ENCODE measurements at regions of chr9 and their contacts with region 1.

Region 1: GRCh38 chr9:114348906-114349482 is 19.3 kb downstream of the ORM2 start:
- DNase-seq: peak; percentile 84 to 96 (median 95)
- H3K4me3 ChIP-seq: no peak overlapping the region
- H3K27ac ChIP-seq: peak overlapping the region in 3 of 5 donors; percentile 63 to 85 (median 68)
- H3K4me1 ChIP-seq: peaks cover 6 to 7% of the 10 kb centered on the region in 2 donors
- H3K27me3 ChIP-seq: no peaks in the 10 kb centered on the region
- CTCF ChIP-seq: no peak
- POLR2A ChIP-seq: peak in 1 of 2 donors; percentile 16

Region 2: DNA sequence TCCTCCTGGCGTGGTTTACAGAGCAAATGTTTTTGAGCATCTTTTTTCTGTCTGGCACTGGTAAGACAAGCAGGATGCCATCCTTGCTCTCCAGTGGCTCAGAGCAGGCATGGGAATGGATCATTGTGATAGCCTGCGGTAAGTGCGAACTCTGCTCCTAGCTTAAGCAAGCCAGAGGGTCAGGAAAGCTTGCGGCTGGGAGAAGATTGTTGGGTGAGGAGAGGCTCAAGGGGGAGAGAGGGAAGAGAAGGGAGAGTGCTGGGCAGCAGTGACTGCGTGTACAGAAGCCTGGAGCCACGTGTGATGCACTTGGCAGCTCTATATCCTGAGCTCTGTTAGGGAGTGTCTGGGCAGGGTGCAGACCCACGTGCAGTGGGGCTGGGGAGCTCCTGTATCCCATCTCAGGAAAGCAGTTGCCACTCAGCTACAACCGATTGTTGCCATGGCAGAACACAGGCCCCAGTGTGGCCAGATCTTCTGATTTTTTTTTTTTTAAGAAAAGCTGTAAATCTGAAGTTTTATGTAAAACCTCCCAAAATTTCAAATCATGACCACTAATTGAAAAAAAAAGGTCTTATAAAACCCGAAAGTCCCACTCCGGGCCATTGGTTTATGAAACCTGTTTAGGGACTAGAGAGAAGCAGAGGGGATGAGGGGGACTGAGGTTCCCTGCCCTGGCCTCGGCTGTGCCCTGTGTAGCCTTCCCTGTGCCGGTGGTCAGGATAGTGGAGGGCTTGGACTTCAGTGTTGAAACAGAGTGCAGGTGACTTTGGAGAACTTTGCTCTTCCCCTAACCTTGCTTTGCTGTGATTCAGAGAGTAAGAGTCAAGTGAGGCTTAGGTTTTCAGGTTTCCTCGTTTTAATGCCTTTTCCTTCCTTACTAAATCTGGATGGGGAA is 405.6 kb before region 1 on chr9:
- intact Hi-C with region 1: no loop called
- DNase-seq: peak in 2 of 7 donors; percentile 3 to 41
- H3K4me3 ChIP-seq: no peak overlapping the region
- H3K27ac ChIP-seq: no peak overlapping the region
- H3K4me1 ChIP-seq: no peaks in the 10 kb centered on the region
- H3K27me3 ChIP-seq: no peaks in the 10 kb centered on the region
- CTCF ChIP-seq: no peak
- POLR2A ChIP-seq: no peak

Region 3: GRCh38 chr9:114282926-114283325 is 66.1 kb before region 1 on chr9:
- intact Hi-C with region 1: no loop called
- DNase-seq: peak in 2 of 7 donors; percentile 2 to 5
- H3K4me3 ChIP-seq: no peak overlapping the region
- H3K27ac ChIP-seq: no peak overlapping the region
- H3K4me1 ChIP-seq: peaks cover 0 to 21% of the 10 kb centered on the region in 2 donors
- H3K27me3 ChIP-seq: no peaks in the 10 kb centered on the region
- CTCF ChIP-seq: no peak
- POLR2A ChIP-seq: no peak

Region 4: GRCh38 chr9:114304416-114305188 is 44.4 kb before region 1 on chr9:
- intact Hi-C with region 1: no loop called
- DNase-seq: peak in 5 of 7 donors; percentile 4 to 39 (median 11)
- H3K4me3 ChIP-seq: no peak overlapping the region
- H3K27ac ChIP-seq: no peak overlapping the region
- H3K4me1 ChIP-seq: no peaks in the 10 kb centered on the region
- H3K27me3 ChIP-seq: no peaks in the 10 kb centered on the region
- CTCF ChIP-seq: no peak
- POLR2A ChIP-seq: no peak

Region 5: DNA sequence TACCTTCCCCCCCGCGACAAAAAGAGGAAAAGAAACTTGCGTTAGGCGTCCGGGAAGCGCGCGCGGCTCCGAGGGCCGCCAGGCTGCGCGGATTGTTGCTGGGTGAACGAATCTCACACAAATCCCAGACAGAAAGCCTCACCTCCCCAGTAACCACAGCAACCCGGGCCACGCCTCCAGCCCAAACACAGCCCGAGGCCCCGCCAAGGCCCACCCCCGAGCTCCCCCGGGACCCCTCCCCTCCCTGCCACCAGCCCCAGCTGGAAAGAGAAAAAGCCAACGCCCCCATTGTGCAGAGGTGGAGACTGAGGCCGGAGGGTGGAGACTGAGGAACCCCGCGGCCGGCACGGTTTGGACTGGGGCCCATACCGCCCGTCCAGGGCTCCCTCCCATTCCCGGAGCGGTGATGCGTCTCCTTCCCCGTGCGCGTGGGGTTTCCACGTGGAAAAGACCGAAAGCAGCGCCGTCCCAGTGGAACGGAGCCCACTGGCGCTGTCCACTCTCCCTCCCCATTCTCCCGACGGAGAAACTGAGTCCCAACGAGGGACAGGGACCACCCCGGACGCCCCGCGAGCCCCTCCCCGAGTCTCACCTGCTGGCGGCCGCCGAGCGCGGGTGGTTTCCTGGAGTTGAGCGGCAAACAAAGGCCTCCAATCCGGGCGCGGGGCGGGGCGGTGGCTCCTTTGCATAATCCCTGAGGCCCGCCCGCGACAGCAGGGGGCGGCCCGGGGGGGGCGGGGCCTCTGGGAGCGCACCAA is 49.0 kb after region 1 on chr9:
- intact Hi-C with region 1: loop called in 1 of 2 experiments (anchors 10 kb)
- DNase-seq: peak; percentile 96 to 98 (median 97)
- H3K4me3 ChIP-seq: peak overlapping the region in 2 of 4 donors; percentile 46 to 67
- H3K27ac ChIP-seq: peak overlapping the region in 4 of 5 donors; percentile 58 to 86 (median 80)
- H3K4me1 ChIP-seq: peaks cover under 1 to 25% of the 10 kb centered on the region in 2 donors
- H3K27me3 ChIP-seq: no peaks in the 10 kb centered on the region
- CTCF ChIP-seq: peak in 1 of 6 experiments; percentile 9
- POLR2A ChIP-seq: no peak

Region 6: DNA sequence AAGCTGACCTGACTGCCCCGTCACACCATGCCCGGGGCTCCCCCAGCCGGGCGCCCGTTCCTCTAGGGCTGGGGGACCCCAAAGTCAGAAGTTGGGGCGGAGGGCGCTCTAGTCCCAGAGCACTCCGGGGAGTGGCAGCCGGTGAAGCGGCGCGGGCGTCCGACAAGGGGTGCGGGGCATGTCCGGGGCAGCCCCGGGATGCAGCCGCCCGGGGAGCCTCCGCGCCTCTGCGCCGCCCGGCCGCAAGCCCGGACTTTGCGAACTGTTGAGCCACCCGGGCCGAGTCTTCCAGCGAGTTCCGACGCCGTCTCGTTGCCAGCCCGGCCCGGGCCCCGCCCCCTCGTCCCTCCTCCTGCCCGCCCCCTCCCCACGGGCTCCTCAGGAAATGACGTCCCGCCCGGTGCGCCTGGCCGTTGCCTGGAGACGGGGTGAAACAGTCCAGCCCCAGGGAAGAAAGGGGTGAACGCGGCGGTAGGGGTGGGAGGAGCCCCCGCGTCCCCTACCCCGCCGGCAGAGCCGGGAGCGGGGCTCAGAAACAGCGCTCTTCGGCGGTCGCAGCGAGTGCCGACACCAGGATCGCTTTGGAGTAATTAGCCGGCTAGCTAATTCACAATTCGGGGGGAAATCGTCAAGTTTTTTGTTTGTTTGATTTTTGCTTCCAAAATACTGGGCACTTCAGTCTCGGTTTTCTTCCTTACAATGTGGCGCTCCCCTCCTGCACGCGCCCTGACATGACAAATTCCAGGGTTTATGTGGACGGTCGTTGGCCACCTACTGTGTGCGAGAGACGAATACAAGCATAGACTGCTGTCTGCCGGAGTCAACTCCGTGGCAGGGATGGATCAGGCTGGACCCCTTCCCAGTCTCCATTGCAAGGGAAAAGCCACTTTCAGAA is 156.4 kb after region 1 on chr9 and contains the start of gene WHRN:
- intact Hi-C with region 1: loop called in 1 of 2 experiments (anchors 10 kb)
- DNase-seq: peak; percentile 95 to 98 (median 97)
- H3K4me3 ChIP-seq: peak within 1 kb of the TSS in 3 of 4 donors; percentile 29 to 74 (median 53)
- H3K27ac ChIP-seq: peak within 1 kb of the TSS; percentile 59 to 92 (median 81)
- H3K4me1 ChIP-seq: peaks cover 14 to 16% of the 10 kb centered on the region in 2 donors
- H3K27me3 ChIP-seq: no peaks in the 10 kb centered on the region
- CTCF ChIP-seq: no peak
- POLR2A ChIP-seq: peak; percentile 65 to 95
- total RNA-seq, gene WHRN: 33.4 to 154 (median 92.7) TPM